Esophagus squamous epithelium (tissue), 5 donors: ENCODE measurements at regions of chr1 and their contacts with region 1.

Region 1: GRCh38 chr1:155244368-155245162 is 10.7 kb downstream of the ENTREP3 start:
- DNase-seq: peak; percentile 92
- H3K4me3 ChIP-seq: peak overlapping the region; percentile 61 to 80 (median 76)
- H3K27ac ChIP-seq: peak overlapping the region; percentile 88 to 96 (median 92)
- H3K4me1 ChIP-seq: peaks cover 2 to 57% (median 34%) of the 10 kb centered on the region in 3 donors
- H3K27me3 ChIP-seq: no peaks in the 10 kb centered on the region
- CTCF ChIP-seq: peak in 5 of 6 experiments; percentile 55 to 100 (median 78)
- POLR2A ChIP-seq: peak in 3 of 4 donors; percentile 61 to 86 (median 86)

Region 2: GRCh38 chr1:155208541-155209311 is 35.8 kb before region 1 on chr1 and contains the start of gene MTX1:
- intact Hi-C with region 1: loop called (anchors 5 kb)
- DNase-seq: peak; percentile 55
- H3K4me3 ChIP-seq: peak within 1 kb of the TSS; percentile 79 to 100 (median 86)
- H3K27ac ChIP-seq: peak within 1 kb of the TSS; percentile 97 to 99 (median 98)
- H3K4me1 ChIP-seq: peaks cover 21 to 47% (median 26%) of the 10 kb centered on the region in 3 donors
- H3K27me3 ChIP-seq: no peaks in the 10 kb centered on the region
- CTCF ChIP-seq: no peak
- POLR2A ChIP-seq: peak in 2 of 4 donors; percentile 24 to 30
- total RNA-seq, gene MTX1: 34.0 to 59.1 (median 42.9) TPM